Activated T-helper 1 cell treated with anti-CD3 and anti-CD28 coated beads, Interleukin-12 subunit alpha, Interleukin-12 subunit beta, Interleukin-2, Interleukin-4 antibody, amounts not matched to agents 30 ng/mL and 10 ng/mL and 1 ng/mL, durations not matched to agents 14 hours and 24 hours and 36 hours (primary cell): ENCODE measurements at regions of chr2 and their contacts with region 1.

Region 1: DNA sequence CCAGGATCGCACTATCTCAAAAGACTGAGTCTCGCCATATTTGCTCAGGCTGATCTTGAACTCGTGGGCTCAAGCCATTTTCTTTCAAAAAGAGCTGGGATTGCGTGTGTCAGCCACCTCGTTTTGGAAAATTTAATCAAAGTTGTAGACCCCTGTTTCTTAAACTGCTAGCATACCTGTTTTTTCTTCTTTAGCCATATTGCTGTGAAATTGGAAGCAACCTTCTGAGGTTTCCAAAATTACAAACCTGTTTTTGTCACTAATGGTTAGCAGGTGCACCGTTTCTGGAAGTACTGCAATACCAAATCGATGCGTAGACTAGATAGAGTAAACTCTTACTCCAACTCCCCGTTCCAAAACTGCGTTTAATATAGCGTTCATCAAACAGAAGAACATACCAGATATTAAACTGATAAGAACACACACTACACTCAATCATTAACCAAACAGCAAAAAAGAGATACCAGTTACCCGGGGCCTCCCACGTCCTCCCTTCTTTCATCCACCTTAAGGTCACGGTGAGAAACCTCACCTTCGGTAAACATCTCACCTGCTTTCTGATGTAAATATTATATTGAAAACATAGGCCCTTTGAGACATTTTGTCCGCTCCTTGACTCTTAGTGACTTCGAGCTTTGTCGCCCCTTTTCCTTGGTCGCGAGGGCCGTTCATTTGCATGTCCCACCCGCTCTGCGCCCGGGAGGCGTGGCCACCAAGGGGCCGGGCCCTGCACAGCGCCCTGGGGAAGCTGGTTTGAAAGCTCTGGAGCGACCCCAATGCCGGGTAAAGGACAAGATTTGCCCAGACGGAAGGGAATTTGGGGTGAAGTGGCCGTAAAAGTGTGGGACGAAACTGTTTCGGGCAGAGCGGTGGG is at the start of gene RNU2-63P:
- DNase-seq: peak; percentile 65
- H3K4me3 Mint-ChIP-seq: peak within 1 kb of the TSS; percentile 92
- H3K27ac Mint-ChIP-seq: peak within 1 kb of the TSS; percentile 99
- H3K4me1 Mint-ChIP-seq: peaks cover 21% of the 10 kb centered on the region
- H3K27me3 Mint-ChIP-seq: peaks cover 5% of the 10 kb centered on the region
- total RNA-seq, gene RNU2-63P: 28.5 and 32.9 TPM in 2 replicates

Region 2: GRCh38 chr2:88027697-88028389 is 11.5 kb after region 1 on chr2:
- intact Hi-C with region 1: loop called (anchors 1 kb)
- DNase-seq: no peak
- H3K4me3 Mint-ChIP-seq: peak overlapping the region; percentile 72
- H3K27ac Mint-ChIP-seq: peak overlapping the region; percentile 83
- H3K4me1 Mint-ChIP-seq: peaks cover 13% of the 10 kb centered on the region
- H3K27me3 Mint-ChIP-seq: no peaks in the 10 kb centered on the region

Region 3: DNA sequence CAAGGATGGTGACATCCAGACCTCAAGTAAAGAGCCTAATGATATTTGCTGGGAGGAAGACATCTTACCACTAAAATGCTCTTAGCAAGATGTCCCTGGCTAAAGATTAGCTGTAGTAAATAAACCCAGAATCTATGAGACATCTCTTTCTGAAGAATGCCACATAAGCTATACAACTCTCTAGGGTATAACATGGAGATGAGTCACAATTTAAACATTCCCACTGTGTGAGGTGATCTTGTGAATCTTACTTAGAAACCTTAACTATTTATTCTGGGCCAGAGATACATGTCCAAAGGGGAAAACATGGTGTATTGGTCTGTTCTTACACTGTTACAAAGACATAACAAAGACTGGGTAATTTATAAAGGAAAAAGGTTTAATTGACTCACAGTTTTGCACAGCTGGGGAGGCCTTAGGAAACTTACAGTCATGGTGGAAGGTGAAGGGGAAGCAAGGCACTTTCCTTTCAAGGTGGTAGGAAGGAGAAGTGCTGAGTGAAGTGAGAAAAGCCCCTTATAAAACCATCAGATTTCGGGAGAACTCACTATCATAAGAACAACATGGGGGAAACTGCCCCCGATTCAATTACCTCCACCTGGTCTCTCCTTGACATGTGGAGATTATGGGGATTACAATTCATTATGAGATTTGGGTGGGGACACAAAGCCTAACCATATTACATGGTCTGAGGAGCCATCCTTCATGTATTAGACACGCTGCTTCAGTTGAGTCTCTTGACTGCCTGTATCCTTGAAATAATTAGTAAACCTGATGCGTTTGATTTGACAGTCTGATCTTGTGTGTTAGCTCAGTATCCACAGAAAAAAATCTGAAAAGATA is 22.2 kb after region 1 on chr2:
- intact Hi-C with region 1: no loop called
- DNase-seq: no peak
- H3K4me3 Mint-ChIP-seq: no peak overlapping the region
- H3K27ac Mint-ChIP-seq: peak overlapping the region; percentile 36
- H3K4me1 Mint-ChIP-seq: peaks cover 25% of the 10 kb centered on the region
- H3K27me3 Mint-ChIP-seq: no peaks in the 10 kb centered on the region

Region 4: GRCh38 chr2:88082781-88083180 is 66.5 kb after region 1 on chr2:
- intact Hi-C with region 1: no loop called
- DNase-seq: no peak
- H3K4me3 Mint-ChIP-seq: no peak overlapping the region
- H3K27ac Mint-ChIP-seq: no peak overlapping the region
- H3K4me1 Mint-ChIP-seq: no peaks in the 10 kb centered on the region
- H3K27me3 Mint-ChIP-seq: no peaks in the 10 kb centered on the region

Region 5: DNA sequence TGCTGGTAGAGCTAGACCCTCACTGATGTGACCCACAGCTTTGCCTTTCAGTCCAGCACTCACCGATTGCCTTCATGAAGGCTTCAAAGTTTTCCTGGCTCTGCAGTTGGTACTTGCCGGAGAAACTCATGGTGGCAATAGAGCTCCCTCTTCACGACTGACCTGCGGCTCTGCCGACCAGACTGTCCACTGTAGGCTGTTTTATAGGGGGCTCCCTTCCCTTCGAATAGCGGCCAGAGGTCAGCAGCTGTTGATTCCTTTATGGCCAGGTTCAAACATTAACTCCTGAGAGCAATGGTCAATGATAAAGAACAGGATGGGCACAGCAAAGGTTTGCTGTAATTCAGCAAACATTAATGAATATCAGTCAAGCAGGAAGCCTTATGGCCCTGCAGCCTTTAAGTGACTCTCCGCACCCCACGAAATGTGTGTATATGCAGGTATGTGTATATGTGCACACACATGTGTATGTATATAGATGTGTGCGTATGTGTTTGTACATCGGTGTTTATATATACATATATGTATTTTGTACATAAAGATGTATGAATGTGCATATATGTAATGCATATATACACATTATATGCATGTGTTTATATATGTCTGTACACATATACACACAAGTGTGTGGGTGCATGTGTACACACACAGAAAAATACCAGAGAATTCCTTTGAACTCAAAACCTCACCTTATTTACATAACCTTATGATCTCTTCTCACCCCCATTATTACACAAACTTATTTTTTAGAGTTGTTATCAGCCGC is 111.7 kb after region 1 on chr2 and contains the start of gene FABP1:
- intact Hi-C with region 1: no loop called
- DNase-seq: no peak
- H3K4me3 Mint-ChIP-seq: no peak within 1 kb of the TSS
- H3K27ac Mint-ChIP-seq: no peak within 1 kb of the TSS
- H3K4me1 Mint-ChIP-seq: no peaks in the 10 kb centered on the region
- H3K27me3 Mint-ChIP-seq: peaks cover 4% of the 10 kb centered on the region
- total RNA-seq, gene FABP1: not detected in 2 replicates

Region 6: DNA sequence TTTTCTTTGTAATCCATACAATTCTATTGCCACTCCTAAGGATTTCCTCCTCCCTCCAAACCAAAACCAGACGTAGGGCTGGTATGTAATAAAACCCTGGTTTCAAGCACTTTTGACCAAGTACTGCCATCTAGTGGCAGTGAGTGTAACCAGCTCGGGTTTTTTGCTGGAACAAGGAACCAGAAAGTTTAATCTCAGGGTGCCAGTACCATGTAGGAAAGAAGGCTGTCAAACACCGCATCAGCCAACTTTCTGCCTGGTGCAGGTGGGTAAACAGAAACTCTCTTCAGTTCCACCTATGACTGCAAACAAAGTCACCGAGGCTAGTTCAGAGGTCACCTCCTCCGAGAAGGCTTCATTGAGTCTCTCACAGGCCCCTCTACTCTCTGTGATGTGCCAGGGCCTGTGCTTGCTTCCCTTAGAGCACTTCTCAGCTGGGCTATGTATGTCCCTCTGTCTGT is 143.7 kb after region 1 on chr2:
- intact Hi-C with region 1: loop called (anchors 1 kb)
- DNase-seq: peak; percentile 33
- H3K4me3 Mint-ChIP-seq: no peak overlapping the region
- H3K27ac Mint-ChIP-seq: no peak overlapping the region
- H3K4me1 Mint-ChIP-seq: no peaks in the 10 kb centered on the region
- H3K27me3 Mint-ChIP-seq: peaks cover 3% of the 10 kb centered on the region